Naive thymus-derived CD4-positive, alpha-beta T cell (primary cell): ENCODE measurements at regions of chr16 and their contacts with region 1.

Region 1: DNA sequence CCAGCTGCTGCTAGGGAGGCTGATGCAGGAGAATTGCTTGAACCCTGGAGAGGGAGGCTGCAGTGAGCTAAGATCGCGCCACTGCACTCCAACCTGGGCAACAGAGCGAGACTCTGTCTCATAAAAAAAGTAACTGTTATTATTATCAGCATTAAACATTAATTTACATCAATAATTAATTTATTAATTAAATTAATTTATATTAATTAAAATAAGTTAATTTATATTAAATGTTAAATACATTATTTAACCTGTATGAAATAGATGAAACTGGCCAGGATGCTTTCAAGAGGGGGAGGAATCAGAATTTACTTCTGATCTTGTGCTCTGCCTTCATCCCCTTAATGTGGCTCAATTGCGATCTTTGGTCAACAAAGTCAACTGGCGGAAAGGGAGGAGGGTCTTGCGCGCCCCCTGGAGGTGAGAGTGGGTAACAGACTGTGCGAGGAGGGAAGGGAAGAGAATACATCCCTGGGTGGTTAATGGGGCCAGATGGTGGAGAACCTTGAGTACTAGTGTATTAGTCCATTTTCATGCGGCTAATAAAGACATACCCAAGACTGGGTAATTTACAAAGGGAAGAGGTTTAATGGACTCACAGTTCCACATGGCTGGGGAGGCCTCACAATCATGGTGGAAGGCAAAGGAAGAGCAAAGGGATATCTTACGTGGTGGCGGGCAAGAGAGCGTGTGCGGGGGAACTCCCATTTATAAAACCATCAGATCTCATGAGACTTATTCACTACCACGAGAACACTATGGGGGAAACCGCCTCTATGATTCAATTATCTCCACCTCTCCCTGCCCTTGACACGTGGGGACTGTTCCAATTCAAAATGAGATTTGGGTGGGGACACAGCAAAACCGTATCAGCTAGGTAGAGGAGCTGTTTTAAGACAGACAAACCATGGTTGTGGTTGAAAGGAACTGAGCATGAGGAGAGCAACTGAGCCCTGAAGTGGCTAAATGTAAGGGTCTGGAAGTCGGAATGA is 15.7 kb upstream of the CPPED1 start:
- DNase-seq: peak; percentile 42 to 83 (median 63)
- ATAC-seq: peak; percentile 92
- H3K4me3 ChIP-seq: no peak overlapping the region
- H3K4me3 Mint-ChIP-seq: no peak overlapping the region
- H3K27ac ChIP-seq: no peak overlapping the region
- H3K27ac Mint-ChIP-seq: peak overlapping the region in 1 of 9 donors; percentile 63
- H3K4me1 ChIP-seq: no peaks in the 10 kb centered on the region
- H3K4me1 Mint-ChIP-seq: peaks cover 0 to 21% (median 3%) of the 10 kb centered on the region in 7 donors
- H3K27me3 ChIP-seq: no peaks in the 10 kb centered on the region
- H3K27me3 Mint-ChIP-seq: no peaks in the 10 kb centered on the region

Region 2: GRCh38 chr16:11949527-11949926 is 869.9 kb before region 1 on chr16:
- CTCF ChIA-PET with region 1: no interaction called
- POLR2A ChIA-PET with region 1: no interaction called
- intact Hi-C with region 1: loop called in 1 of 2 experiments (anchors 2 kb)
- DNase-seq: peak in 3 of 9 donors; percentile 25 to 31 (median 25)
- ATAC-seq: peak; percentile 59
- H3K4me3 ChIP-seq: no peak overlapping the region
- H3K4me3 Mint-ChIP-seq: no peak overlapping the region
- H3K27ac ChIP-seq: no peak overlapping the region
- H3K27ac Mint-ChIP-seq: no peak overlapping the region
- H3K4me1 ChIP-seq: no peaks in the 10 kb centered on the region
- H3K4me1 Mint-ChIP-seq: peaks cover 0 to 6% (median 0%) of the 10 kb centered on the region in 7 donors
- H3K27me3 ChIP-seq: no peaks in the 10 kb centered on the region
- H3K27me3 Mint-ChIP-seq: no peaks in the 10 kb centered on the region

Region 3: GRCh38 chr16:12095275-12096156 is 723.9 kb before region 1 on chr16:
- CTCF ChIA-PET with region 1: interaction called, 6 read pairs
- POLR2A ChIA-PET with region 1: no interaction called
- intact Hi-C with region 1: loop called in 1 of 2 experiments (anchors 1 kb)
- DNase-seq: peak; percentile 27 to 70 (median 57)
- ATAC-seq: peak; percentile 76
- H3K4me3 ChIP-seq: peak overlapping the region; percentile 31
- H3K4me3 Mint-ChIP-seq: peak overlapping the region; percentile 70 to 86 (median 82)
- H3K27ac ChIP-seq: no peak overlapping the region
- H3K27ac Mint-ChIP-seq: peak overlapping the region in 7 of 9 donors; percentile 25 to 81 (median 63)
- H3K4me1 ChIP-seq: peaks cover 0 to 2% of the 10 kb centered on the region in 2 donors
- H3K4me1 Mint-ChIP-seq: peaks cover 7 to 52% (median 38%) of the 10 kb centered on the region in 7 donors
- H3K27me3 ChIP-seq: no peaks in the 10 kb centered on the region
- H3K27me3 Mint-ChIP-seq: no peaks in the 10 kb centered on the region

Region 4: GRCh38 chr16:12455287-12455798 is 364.1 kb before region 1 on chr16:
- CTCF ChIA-PET with region 1: interaction called, 4 read pairs
- POLR2A ChIA-PET with region 1: no interaction called
- intact Hi-C with region 1: loop called in 1 of 2 experiments (anchors 1 kb)
- DNase-seq: peak in 6 of 9 donors; percentile 19 to 55 (median 22)
- ATAC-seq: peak; percentile 54
- H3K4me3 ChIP-seq: no peak overlapping the region
- H3K4me3 Mint-ChIP-seq: no peak overlapping the region
- H3K27ac ChIP-seq: no peak overlapping the region
- H3K27ac Mint-ChIP-seq: peak overlapping the region in 3 of 9 donors; percentile 19 to 43 (median 26)
- H3K4me1 ChIP-seq: peaks cover 0 to 24% of the 10 kb centered on the region in 2 donors
- H3K4me1 Mint-ChIP-seq: peaks cover 28 to 44% (median 35%) of the 10 kb centered on the region in 7 donors
- H3K27me3 ChIP-seq: no peaks in the 10 kb centered on the region
- H3K27me3 Mint-ChIP-seq: no peaks in the 10 kb centered on the region

Region 5: DNA sequence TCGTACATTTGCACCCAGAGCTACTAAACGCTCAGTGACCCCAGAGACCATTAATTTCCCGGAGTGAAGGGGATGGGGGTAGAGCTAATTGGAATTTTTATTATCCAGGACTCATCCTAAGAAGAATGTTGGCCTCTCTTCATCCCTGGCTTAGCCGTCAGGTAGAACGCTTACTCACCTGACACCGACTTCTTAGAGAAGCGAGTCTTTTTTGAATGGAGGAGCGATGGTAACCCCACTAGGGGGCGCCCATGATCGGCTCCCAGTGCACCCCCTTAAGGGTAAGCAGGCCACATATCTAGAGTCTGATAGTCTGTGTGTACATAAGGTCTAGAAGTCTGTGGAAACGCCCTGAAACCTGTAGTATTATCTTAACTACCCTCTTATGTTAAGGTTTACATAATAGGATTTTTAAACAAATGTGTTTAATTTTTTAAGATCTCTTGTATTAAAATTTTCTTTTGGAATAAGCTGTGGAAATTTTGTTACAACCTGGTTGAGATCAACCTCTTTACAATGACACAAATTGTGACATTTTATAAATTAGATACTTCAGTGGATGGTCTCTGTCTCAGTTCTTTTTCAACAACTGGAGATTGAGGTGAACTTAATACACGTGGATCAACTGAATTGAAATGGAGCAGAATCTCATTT is 245.6 kb before region 1 on chr16:
- CTCF ChIA-PET with region 1: no interaction called
- POLR2A ChIA-PET with region 1: no interaction called
- intact Hi-C with region 1: loop called in 1 of 2 experiments (anchors 1 kb)
- DNase-seq: peak in 6 of 9 donors; percentile 16 to 59 (median 29)
- ATAC-seq: peak; percentile 42
- H3K4me3 ChIP-seq: no peak overlapping the region
- H3K4me3 Mint-ChIP-seq: no peak overlapping the region
- H3K27ac ChIP-seq: no peak overlapping the region
- H3K27ac Mint-ChIP-seq: peak overlapping the region in 1 of 9 donors; percentile 21
- H3K4me1 ChIP-seq: no peaks in the 10 kb centered on the region
- H3K4me1 Mint-ChIP-seq: peaks cover 4 to 19% (median 13%) of the 10 kb centered on the region in 7 donors
- H3K27me3 ChIP-seq: no peaks in the 10 kb centered on the region
- H3K27me3 Mint-ChIP-seq: no peaks in the 10 kb centered on the region

Region 6: GRCh38 chr16:12758031-12758701 is 61.3 kb before region 1 on chr16:
- CTCF ChIA-PET with region 1: no interaction called
- POLR2A ChIA-PET with region 1: no interaction called
- intact Hi-C with region 1: no loop called
- DNase-seq: no peak
- ATAC-seq: no peak
- H3K4me3 ChIP-seq: no peak overlapping the region
- H3K4me3 Mint-ChIP-seq: no peak overlapping the region
- H3K27ac ChIP-seq: no peak overlapping the region
- H3K27ac Mint-ChIP-seq: no peak overlapping the region
- H3K4me1 ChIP-seq: no peaks in the 10 kb centered on the region
- H3K4me1 Mint-ChIP-seq: peaks cover 0 to 3% (median 0%) of the 10 kb centered on the region in 7 donors
- H3K27me3 ChIP-seq: no peaks in the 10 kb centered on the region
- H3K27me3 Mint-ChIP-seq: no peaks in the 10 kb centered on the region

Region 7: DNA sequence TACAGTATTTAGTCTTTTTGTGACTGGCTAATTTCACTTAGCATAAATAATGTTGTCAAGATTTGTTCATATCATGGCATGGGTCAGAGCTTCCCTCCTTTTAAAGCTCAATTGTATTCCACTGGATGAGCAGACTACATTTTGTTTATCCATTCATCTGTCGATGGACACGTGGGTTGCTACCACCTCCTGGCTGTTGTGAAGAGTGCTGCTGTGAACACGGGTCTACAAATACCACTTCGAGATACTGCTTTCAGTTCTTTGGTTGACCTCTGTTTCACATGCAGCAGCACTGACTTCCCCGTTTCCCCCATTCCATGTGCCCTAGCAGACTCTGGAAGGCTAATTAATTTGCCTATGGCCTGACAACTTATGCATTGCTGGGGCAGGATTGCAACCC is 367.4 kb after region 1 on chr16:
- CTCF ChIA-PET with region 1: no interaction called
- POLR2A ChIA-PET with region 1: no interaction called
- intact Hi-C with region 1: no loop called
- DNase-seq: no peak
- ATAC-seq: no peak
- H3K4me3 ChIP-seq: no peak overlapping the region
- H3K4me3 Mint-ChIP-seq: no peak overlapping the region
- H3K27ac ChIP-seq: no peak overlapping the region
- H3K27ac Mint-ChIP-seq: no peak overlapping the region
- H3K4me1 ChIP-seq: no peaks in the 10 kb centered on the region
- H3K4me1 Mint-ChIP-seq: no peaks in the 10 kb centered on the region
- H3K27me3 ChIP-seq: no peaks in the 10 kb centered on the region
- H3K27me3 Mint-ChIP-seq: peaks cover 0 to 28% (median 10%) of the 10 kb centered on the region in 5 donors